ENCODE measurements at regions of chr1 and their contacts with region 1.

Region 1: DNA sequence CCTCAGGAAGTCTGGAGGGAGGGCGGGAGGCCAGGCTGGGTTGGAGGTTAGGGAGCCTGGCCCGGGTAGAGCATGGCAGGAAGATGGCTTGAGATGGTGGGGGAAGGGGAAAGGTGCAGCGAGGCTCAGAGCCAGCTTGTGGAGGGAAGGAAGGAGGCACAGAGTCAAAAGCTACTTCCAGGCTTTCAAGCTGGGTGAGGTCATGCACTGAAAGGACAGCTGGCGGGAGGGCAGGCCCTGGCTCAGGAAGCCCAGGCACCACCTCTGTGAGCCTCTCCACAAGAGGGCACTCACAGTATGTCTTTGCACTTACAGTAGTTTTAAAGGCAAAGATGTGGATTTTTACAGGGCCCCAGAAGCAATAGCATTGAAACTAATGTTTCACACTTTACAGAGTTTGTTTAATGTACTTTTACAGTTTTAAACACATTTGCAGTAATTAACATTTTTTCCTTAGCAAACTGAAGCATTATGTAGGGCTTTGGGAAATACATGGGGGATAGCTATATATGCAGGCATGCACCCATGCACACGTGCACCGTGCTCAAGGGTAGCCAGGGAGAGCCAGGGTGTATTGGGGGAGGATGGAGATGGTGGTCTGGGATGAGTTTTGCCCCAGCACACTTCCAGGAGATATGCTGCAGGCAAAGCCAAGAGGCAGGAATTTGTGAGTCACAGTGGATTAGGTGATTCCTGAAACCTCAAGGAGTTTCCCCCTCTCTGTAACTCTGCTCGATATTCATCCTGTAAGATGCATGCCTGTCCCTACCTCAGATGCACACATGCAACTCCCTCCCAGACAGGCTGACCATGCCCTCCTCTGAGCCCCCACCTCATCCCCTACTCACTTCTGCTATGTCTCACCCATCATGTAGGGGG is 6.1 kb upstream of the ADAM15 start:
- DNase-seq: peak; percentile 65 to 81 (median 69)
- ATAC-seq: peak; percentile 93
- H3K4me3 ChIP-seq: no peak overlapping the region
- H3K27ac ChIP-seq: no peak overlapping the region
- H3K4me1 ChIP-seq: peaks cover 17 to 32% of the 10 kb centered on the region in 2 experiments
- H3K27me3 ChIP-seq: no peaks in the 10 kb centered on the region; a peak in 1 of 5 replicates
- CTCF ChIP-seq: peak; percentile 76 to 92 (median 84)
- EP300 ChIP-seq: no peak
- POLR2A ChIP-seq: no peak
- RAD21 ChIP-seq: peak; percentile 74 to 84

Region 2: GRCh38 chr1:155029513-155030242 is 15.4 kb before region 1 on chr1:
- CTCF ChIA-PET with region 1: no interaction called
- POLR2A ChIA-PET with region 1: no interaction called
- in situ Hi-C with region 1: no loop called
- intact Hi-C with region 1: no loop called
- DNase-seq: no peak
- ATAC-seq: peak; percentile 11; the same call in 2 of the 3 replicates
- H3K4me3 ChIP-seq: no peak overlapping the region
- H3K27ac ChIP-seq: no peak overlapping the region
- H3K4me1 ChIP-seq: peaks cover 5 to 23% of the 10 kb centered on the region in 2 experiments; a peak in 3 of 5 replicates
- H3K27me3 ChIP-seq: peaks cover 0 to 17% of the 10 kb centered on the region in 2 experiments; a peak in 2 of 5 replicates
- CTCF ChIP-seq: no peak
- EP300 ChIP-seq: no peak
- POLR2A ChIP-seq: no peak
- RAD21 ChIP-seq: no peak

Region 3: GRCh38 chr1:155063550-155064110 is 18.6 kb after region 1 on chr1 and contains the start of gene EFNA4:
- CTCF ChIA-PET with region 1: interaction called, 19 read pairs
- POLR2A ChIA-PET with region 1: interaction called, 3 read pairs
- in situ Hi-C with region 1: no loop called
- intact Hi-C with region 1: loop called (anchors 1 kb)
- DNase-seq: peak; percentile 91 to 93 (median 92)
- ATAC-seq: peak; percentile 91
- H3K4me3 ChIP-seq: peak within 1 kb of the TSS; percentile 58
- H3K27ac ChIP-seq: peak within 1 kb of the TSS; percentile 45; the same call in 2 of the 3 replicates
- H3K4me1 ChIP-seq: peaks cover 27 to 58% of the 10 kb centered on the region in 2 experiments
- H3K27me3 ChIP-seq: no peaks in the 10 kb centered on the region
- CTCF ChIP-seq: no peak
- EP300 ChIP-seq: no peak
- POLR2A ChIP-seq: peak; percentile 71
- RAD21 ChIP-seq: no peak
- polyA plus RNA-seq, gene EFNA4: 0.68 to 0.89 TPM

Measured in K562 (cell line).